Activated naive CD4-positive, alpha-beta T cell treated with anti-CD3 and anti-CD28 coated beads, Interleukin-2, amount 10 ng/mL, durations not matched to agents 7 days and 5 days (primary cell): ENCODE measurements at regions of chr4 and their contacts with region 1.

Region 1: DNA sequence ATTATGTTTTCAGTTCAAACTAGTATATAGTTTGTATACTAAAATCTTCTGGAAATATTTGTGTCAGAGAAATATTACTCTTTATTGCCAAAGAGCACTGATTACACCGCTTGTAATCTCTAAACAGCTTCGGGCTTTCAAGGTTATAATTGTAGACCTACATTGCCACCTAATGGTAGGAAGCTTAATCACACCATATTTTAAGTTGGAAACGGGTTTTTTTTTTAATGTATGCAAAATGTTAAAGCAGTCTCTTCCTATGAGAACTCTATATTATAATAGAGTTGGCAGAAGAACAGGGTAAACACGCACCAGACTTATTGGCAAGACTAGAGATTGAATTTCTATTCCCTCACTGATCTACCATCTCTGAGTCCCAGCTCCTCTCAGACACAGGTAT is 19.5 kb upstream of the NFXL1 start:
- DNase-seq: no peak
- H3K4me3 Mint-ChIP-seq: no peak overlapping the region
- H3K27ac Mint-ChIP-seq: no peak overlapping the region
- H3K4me1 Mint-ChIP-seq: no peaks in the 10 kb centered on the region
- H3K27me3 Mint-ChIP-seq: peaks cover 2% of the 10 kb centered on the region

Region 2: DNA sequence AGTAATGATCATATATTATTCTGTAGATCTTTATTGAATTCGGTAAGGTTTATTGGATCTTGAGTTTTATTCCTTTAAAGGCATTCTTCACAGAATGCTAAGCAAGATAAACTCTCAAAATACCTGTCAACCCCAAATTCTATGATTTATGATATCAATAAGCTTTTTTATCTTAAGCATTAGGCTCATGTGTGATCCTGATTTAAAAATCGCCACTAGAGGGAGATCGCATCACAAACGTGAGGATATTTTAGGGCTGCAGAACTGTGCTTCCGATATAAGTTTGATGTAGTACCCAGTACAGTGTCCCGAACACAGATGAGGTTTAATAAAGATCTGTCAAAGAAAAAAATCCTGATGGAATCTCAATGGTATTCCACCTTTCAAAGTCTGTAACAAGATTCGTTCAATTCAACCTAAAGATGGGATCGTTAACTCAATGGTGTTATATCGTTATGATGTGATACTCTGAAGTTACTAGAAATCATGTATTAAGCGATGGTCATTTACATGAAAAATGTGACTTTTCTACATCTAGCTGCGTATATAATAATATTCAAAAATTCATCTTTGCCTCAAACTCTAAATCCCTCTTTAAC is 264.9 kb before region 1 on chr4:
- CTCF ChIA-PET with region 1: interaction called, 20 read pairs
- DNase-seq: peak; percentile 30
- H3K4me3 Mint-ChIP-seq: no peak overlapping the region
- H3K27ac Mint-ChIP-seq: no peak overlapping the region
- H3K4me1 Mint-ChIP-seq: no peaks in the 10 kb centered on the region
- H3K27me3 Mint-ChIP-seq: peaks cover 9% of the 10 kb centered on the region

Region 3: GRCh38 chr4:47686294-47686872 is 247.5 kb before region 1 on chr4:
- CTCF ChIA-PET with region 1: interaction called, 42 read pairs
- DNase-seq: peak; percentile 78
- H3K4me3 Mint-ChIP-seq: no peak overlapping the region
- H3K27ac Mint-ChIP-seq: no peak overlapping the region
- H3K4me1 Mint-ChIP-seq: no peaks in the 10 kb centered on the region
- H3K27me3 Mint-ChIP-seq: no peaks in the 10 kb centered on the region

Region 4: GRCh38 chr4:47704693-47705325 is 229.0 kb before region 1 on chr4:
- CTCF ChIA-PET with region 1: interaction called, 16 read pairs
- DNase-seq: peak; percentile 32
- H3K4me3 Mint-ChIP-seq: no peak overlapping the region
- H3K27ac Mint-ChIP-seq: no peak overlapping the region
- H3K4me1 Mint-ChIP-seq: no peaks in the 10 kb centered on the region
- H3K27me3 Mint-ChIP-seq: peaks cover 26% of the 10 kb centered on the region

Region 5: GRCh38 chr4:47848041-47848440 is 85.8 kb before region 1 on chr4:
- CTCF ChIA-PET with region 1: no interaction called
- DNase-seq: no peak
- H3K4me3 Mint-ChIP-seq: no peak overlapping the region
- H3K27ac Mint-ChIP-seq: no peak overlapping the region
- H3K4me1 Mint-ChIP-seq: no peaks in the 10 kb centered on the region
- H3K27me3 Mint-ChIP-seq: no peaks in the 10 kb centered on the region

Region 6: DNA sequence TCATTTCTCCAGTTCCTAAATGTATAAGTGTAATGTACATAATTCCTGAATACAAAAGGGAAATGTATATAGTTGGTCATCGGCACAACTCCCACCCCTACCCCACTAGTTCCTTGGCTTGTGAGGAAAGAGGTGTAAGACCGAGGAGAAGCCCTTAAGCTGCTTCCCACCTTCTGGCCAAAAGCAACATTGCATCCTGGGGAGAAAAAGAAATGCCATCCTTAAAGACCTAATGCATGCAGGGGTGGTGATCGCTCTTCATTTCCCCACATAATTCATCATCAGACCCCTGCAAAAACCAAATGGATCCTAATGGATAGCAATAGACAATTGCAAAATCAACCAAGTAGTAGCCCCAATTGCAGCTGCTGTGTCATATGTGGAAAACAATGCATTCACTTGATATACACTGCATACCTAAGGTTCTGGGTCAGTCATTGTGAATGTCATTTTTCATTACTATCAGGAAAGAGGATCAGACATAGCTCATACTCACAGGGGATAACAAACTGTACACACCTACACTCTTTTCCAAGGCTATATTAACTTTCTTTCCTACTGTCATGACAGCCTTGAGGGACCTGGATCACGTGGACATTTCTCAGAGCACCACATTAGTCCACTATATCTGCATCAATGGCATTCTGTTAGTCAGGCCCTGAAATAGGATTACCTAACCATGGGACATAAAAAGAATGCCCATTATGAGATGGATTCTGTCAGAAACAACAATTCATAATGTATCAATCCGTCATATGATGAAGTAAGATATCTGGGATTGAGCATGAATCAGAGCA is 12.3 kb after region 1 on chr4:
- CTCF ChIA-PET with region 1: no interaction called
- DNase-seq: no peak
- H3K4me3 Mint-ChIP-seq: no peak overlapping the region
- H3K27ac Mint-ChIP-seq: no peak overlapping the region
- H3K4me1 Mint-ChIP-seq: no peaks in the 10 kb centered on the region
- H3K27me3 Mint-ChIP-seq: no peaks in the 10 kb centered on the region

Region 7: DNA sequence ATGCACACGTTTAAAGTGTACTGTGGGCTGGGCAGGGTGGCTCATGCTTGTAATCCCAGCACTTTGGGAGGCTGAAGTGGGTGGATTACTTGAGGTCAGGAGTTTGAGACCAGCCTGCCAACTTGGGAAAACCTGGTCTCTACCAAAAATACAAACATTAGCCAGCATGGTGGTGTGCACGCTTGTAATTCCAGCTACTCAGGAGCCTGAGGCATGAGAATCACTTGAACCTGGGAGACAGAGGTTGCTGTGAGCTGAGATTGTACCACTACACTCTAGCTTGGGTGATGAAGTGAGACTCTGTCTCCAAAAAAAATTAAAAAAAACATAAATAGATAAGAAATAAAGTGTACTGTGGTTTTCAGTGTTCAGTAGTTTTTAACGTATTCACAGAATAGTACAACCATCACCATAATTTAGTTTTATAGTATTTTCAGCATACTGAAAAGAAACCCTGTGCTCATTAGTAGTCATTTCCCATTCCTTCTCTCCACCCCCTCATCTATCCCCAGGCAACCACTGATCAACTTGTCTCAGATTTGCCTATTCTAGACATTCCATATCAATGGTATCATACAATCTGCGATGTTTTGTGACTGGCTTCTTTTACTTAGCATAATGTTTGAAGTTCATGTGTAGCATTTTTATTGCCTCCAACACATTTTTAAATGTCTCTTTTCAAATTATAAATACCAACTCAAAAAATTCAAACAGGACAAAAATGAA is 426.6 kb after region 1 on chr4:
- CTCF ChIA-PET with region 1: no interaction called
- DNase-seq: no peak
- H3K4me3 Mint-ChIP-seq: no peak overlapping the region
- H3K27ac Mint-ChIP-seq: no peak overlapping the region
- H3K4me1 Mint-ChIP-seq: no peaks in the 10 kb centered on the region
- H3K27me3 Mint-ChIP-seq: no peaks in the 10 kb centered on the region

Region 8: DNA sequence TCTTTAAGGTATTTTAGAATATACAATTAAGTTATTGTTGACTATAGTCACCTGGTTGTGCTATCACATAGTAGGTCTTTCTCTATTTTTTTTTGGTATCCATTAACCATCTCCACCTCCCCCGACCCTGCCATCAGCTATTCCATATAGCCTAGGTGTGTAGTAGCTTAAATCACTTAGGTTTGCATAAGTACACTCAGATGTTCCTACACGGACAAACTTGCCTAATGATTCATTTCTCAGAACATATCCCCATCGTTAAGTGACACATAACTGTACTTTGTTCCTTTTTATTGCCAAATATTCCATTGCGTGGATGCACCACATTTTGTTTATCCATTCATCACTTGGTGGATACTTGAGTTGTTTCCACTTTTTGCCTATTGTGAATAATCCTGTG is 475.4 kb after region 1 on chr4:
- CTCF ChIA-PET with region 1: no interaction called
- DNase-seq: no peak
- H3K4me3 Mint-ChIP-seq: no peak overlapping the region
- H3K27ac Mint-ChIP-seq: no peak overlapping the region
- H3K4me1 Mint-ChIP-seq: no peaks in the 10 kb centered on the region
- H3K27me3 Mint-ChIP-seq: no peaks in the 10 kb centered on the region